PC-3 (cell line): ENCODE measurements at regions of chr19 and their contacts with region 1.

Region 1: DNA sequence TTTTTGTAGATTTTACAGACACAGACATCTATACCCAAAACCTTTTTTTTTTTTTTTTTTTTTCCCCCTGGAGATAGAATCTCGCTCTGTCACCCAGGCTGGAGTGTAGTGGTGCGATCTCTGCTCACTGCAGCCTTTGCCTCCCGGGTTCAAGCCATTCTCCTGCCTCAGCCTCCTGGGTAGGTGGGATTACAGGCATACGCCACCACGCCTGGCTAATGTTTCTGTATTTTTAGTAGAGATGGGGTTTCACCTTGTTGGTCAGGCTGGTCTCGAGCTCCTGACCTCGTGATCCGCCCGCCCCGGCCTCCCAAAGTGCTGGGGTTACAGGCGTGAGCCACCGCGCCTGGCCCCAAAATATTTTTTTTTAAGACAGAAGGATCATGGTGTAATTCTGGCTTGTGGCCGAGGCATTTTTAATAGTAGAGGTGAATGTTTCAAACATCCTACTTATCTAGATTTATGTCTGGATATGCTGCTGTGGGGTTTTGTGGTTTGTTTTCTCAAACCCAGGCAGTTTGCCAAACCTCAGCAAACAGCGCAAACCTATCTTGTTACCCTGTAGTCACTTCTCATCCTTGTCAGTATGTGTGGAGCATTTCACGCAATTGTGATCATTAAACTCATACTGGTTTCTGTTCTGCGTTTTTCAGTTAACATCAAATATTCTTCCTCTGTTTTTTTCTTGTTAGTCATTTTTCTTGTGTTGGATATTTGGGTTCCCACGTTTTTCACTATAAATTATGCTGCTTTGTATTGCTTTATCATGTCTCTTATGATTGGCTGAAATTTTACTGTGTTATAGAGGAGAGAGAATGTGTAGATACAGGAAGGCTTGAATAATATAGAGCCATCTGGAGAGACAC is 36.2 kb upstream of the GARRE1 start:
- DNase-seq: peak; percentile 96
- ATAC-seq: peak; percentile 90
- H3K4me3 ChIP-seq: 0 out of 2 replicates have a peak overlapping the region, but pooled peaks have one; percentile 11
- H3K27ac ChIP-seq: peak overlapping the region; percentile 72
- H3K4me1 ChIP-seq: peaks cover 16% of the 10 kb centered on the region
- H3K27me3 ChIP-seq: no peaks in the 10 kb centered on the region
- CTCF ChIP-seq: no peak

Region 2: DNA sequence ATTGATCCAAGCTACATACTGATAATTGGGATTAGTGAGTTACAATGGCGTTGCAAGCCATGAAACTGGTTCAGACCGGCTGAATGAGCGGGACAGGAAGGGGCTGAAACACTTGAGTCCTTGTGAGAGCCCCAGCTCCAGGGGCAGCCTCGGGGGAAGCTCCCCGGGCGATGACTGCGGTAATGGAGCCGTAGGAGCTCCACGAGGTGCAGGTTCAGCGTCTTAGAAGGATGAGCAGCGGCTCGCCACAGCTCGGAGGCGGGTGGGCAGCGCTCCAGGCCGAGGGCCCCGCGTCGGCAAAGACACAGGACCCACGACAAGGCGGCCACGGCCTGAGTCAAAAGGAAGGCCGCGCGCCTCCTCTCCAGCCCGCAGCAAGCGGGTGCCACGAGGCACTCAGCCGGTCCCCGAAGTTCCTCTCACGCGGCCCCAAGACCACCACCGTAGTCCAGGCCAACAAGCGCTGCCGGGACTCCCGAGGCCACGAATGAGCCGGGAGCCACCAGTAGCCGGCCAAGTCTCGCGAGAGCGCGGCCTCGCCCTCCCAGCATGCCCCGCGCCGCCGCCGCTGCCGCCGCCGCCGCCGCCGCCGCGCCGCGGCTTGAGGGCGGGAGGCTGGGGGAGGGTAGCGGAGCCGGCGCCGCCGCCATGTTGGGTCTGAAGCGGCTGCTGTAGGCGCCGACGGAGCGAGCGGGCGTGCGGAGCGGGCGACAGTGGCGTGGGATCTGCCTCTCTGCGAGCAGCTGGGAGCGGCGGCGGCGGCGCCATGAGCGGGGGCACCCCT is 46.1 kb before region 1 on chr19 and contains the start of gene LSM14A:
- CTCF ChIA-PET with region 1: no interaction called
- POLR2A ChIA-PET with region 1: no interaction called
- intact Hi-C with region 1: loop called (anchors 2 kb)
- DNase-seq: peak; percentile 72
- ATAC-seq: peak; percentile 78
- H3K4me3 ChIP-seq: peak within 1 kb of the TSS; percentile 95
- H3K27ac ChIP-seq: peak within 1 kb of the TSS; percentile 81
- H3K4me1 ChIP-seq: peaks cover 30% of the 10 kb centered on the region
- H3K27me3 ChIP-seq: no peaks in the 10 kb centered on the region
- CTCF ChIP-seq: no peak
- total RNA-seq, gene LSM14A: 67.4 and 88.5 TPM in 2 replicates

Region 3: GRCh38 chr19:34428549-34429285 is 210.5 kb after region 1 on chr19:
- CTCF ChIA-PET with region 1: interaction called, 13 read pairs
- POLR2A ChIA-PET with region 1: no interaction called
- intact Hi-C with region 1: no loop called
- DNase-seq: peak; percentile 9
- ATAC-seq: peak; percentile 63
- H3K4me3 ChIP-seq: peak overlapping the region; percentile 98
- H3K27ac ChIP-seq: peak overlapping the region; percentile 53
- H3K4me1 ChIP-seq: peaks cover 12% of the 10 kb centered on the region; the same call in 1 of the 2 replicates
- H3K27me3 ChIP-seq: no peaks in the 10 kb centered on the region
- CTCF ChIP-seq: no peak